Ovary (tissue), 10 donors: ENCODE measurements at regions of chr4 and their contacts with region 1.

Region 1: GRCh38 chr4:120922381-120923206 is at the start of gene PRDM5:
- DNase-seq: peak; percentile 74 to 89 (median 87)
- H3K4me3 ChIP-seq: peak within 1 kb of the TSS; percentile 51
- H3K27ac ChIP-seq: peak within 1 kb of the TSS; percentile 99 to 100
- H3K4me1 ChIP-seq: peaks cover 10% of the 10 kb centered on the region
- H3K27me3 ChIP-seq: no peaks in the 10 kb centered on the region
- CTCF ChIP-seq: peak in 1 of 3 donors; percentile 22
- EP300 ChIP-seq: no peak
- POLR2A ChIP-seq: peak; percentile 46
- total RNA-seq, gene PRDM5: 33.4 to 53.8 (median 45.3) TPM

Region 2: DNA sequence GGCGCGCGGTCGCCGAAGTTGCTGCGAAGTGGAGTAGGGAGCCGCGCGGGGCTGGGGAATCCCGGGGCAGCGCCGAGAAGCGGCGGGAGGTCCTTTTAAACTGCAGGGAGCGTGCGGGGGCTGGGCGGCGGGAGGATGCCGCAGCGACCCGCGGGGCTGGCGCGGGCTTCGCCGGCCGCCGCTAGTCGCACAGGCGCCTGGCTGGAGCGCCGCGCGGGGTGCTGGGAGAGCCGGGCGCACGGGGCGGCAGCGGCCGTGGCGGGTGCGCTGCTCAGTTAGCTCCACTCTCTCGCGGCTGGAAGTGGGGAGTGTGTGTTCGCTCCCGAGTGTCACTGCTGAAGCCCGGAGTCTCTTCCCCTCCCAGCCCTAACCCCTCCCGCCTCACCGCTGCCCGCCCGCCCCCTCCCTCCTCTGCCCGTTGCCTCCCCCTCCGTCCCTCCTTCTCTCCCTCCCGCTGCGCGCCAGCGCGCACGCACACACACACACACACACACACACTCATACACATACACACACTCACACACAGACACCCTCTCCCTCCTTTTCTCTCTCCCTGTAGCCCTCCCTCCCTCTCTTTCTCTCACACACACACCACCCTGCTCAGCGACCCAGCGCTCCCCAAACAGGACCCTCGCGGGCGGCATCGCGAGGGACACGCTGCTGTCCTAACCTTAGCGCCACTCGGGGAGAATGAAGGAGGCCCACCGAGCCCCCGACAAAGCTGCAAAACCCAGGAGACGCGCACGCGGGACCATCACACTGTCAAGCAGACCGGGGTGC is 149.8 kb after region 1 on chr4 and contains the start of gene NDNF:
- intact Hi-C with region 1: loop called in 3 of 4 experiments (anchors 5 kb)
- DNase-seq: peak; percentile 75 to 90 (median 82)
- H3K4me3 ChIP-seq: peak within 1 kb of the TSS; percentile 54
- H3K27ac ChIP-seq: peak within 1 kb of the TSS; percentile 67 to 87
- H3K4me1 ChIP-seq: peaks cover 2% of the 10 kb centered on the region
- H3K27me3 ChIP-seq: no peaks in the 10 kb centered on the region
- CTCF ChIP-seq: no peak
- EP300 ChIP-seq: no peak
- POLR2A ChIP-seq: peak; percentile 29
- total RNA-seq, gene NDNF: 20.6 to 68.0 (median 46.6) TPM